Right ventricle myocardium inferior (tissue), 1 donor: ENCODE measurements at regions of chr2 and their contacts with region 1.

Region 1: GRCh38 chr2:86157009-86157556 is 38.2 kb downstream of the IMMT start:
- DNase-seq: no peak
- ATAC-seq: no peak

Region 2: DNA sequence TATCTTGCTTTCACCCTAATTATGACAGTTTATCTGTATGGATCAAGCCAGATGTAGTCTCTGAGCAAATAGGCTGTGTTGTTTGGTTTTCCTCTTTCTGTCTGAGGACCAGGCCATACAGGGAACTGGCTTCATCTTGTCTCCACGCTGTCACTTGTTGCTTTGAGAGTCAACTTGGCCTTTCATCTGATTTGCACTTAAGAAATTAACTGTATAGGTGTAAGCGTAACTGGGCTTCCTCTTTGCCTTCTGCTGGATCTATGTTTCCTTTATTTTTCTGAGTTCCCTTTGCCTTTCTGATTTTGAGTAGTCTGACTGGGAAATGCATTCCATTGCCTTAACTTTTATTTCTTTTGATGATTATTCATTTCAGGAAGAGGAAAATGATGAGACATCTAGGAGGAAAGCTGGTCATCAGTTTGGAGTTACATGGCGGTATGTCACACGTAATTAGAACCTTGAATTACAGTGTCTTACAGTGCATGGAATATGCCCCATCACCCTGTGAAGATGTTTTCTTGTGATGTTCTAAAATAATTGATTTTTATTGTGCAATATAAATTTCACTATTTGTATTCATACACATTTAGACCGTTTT is 33.7 kb before region 1 on chr2:
- intact Hi-C with region 1: loop called (anchors 5 kb)
- DNase-seq: no peak
- ATAC-seq: no peak

Region 3: GRCh38 chr2:86249579-86250391 is 92.7 kb after region 1 on chr2:
- intact Hi-C with region 1: no loop called
- DNase-seq: no peak
- ATAC-seq: no peak